CD4-positive, alpha-beta T cell (primary cell): ENCODE measurements at regions of chr16 and their contacts with region 1.

Region 1: GRCh38 chr16:30557957-30558788 is at the start of gene ZNF764:
- DNase-seq: peak; percentile 90 to 99 (median 95)
- ATAC-seq: peak; percentile 89
- H3K4me3 ChIP-seq: peak within 1 kb of the TSS; percentile 73
- H3K4me3 Mint-ChIP-seq: peak within 1 kb of the TSS; percentile 93
- H3K27ac ChIP-seq: peak within 1 kb of the TSS; percentile 93 to 94
- H3K27ac Mint-ChIP-seq: peak within 1 kb of the TSS; percentile 94
- H3K4me1 ChIP-seq: peaks cover 68% of the 10 kb centered on the region
- H3K4me1 Mint-ChIP-seq: peaks cover 41% of the 10 kb centered on the region
- H3K27me3 ChIP-seq: no peaks in the 10 kb centered on the region
- H3K27me3 Mint-ChIP-seq: no peaks in the 10 kb centered on the region
- CTCF ChIP-seq: no peak
- total RNA-seq, gene ZNF764: 20.4 to 22.9 TPM

Region 2: DNA sequence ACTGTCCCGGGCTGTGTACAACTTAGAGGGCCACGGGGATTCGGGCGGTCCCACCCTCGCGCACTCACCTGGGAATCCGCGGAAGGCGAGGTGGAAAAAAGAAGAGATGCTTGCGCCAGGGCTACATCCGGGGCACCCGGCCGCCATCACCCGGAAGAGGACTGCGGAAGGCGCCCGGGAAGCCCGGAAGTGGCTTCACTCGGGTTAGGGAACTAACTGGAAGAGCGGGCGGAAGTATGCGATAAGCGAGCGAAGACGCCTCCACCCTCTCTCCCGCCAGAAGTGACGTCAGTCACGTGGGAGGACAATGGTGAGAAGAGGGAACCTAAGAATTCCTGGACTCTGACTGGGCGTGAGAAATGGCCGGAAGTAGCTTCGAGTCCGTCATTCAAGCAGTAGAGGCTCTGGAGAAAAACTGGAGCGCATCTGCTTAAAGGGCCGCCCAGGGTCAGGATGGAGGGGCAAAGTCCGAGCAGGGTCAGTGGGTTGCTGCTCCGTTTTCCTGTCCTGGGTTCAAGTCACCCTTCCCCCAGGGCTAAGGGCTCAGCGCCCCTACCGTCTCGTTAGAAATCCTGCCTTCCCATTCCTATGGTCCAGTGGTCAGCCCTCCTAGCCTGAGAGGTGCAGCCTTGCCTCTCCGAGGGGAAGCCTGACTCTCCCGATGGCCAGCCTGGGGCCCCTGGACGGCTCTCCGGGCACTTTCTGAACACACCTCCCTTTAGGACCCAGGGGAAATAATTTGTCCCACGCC is 202.9 kb before region 1 on chr16 and contains the start of gene CD2BP2:
- CTCF ChIA-PET with region 1: no interaction called
- POLR2A ChIA-PET with region 1: no interaction called
- intact Hi-C with region 1: loop called in 1 of 2 experiments (anchors 5 kb)
- DNase-seq: peak; percentile 71 to 97 (median 84)
- ATAC-seq: peak; percentile 88
- H3K4me3 ChIP-seq: peak within 1 kb of the TSS; percentile 98
- H3K4me3 Mint-ChIP-seq: peak within 1 kb of the TSS; percentile 91
- H3K27ac ChIP-seq: peak within 1 kb of the TSS; percentile 92 to 99
- H3K27ac Mint-ChIP-seq: peak within 1 kb of the TSS; percentile 89
- H3K4me1 ChIP-seq: peaks cover 35% of the 10 kb centered on the region
- H3K4me1 Mint-ChIP-seq: peaks cover 28% of the 10 kb centered on the region
- H3K27me3 ChIP-seq: no peaks in the 10 kb centered on the region
- H3K27me3 Mint-ChIP-seq: no peaks in the 10 kb centered on the region
- CTCF ChIP-seq: no peak
- total RNA-seq, gene CD2BP2: 39.1 to 41.7 TPM

Region 3: GRCh38 chr16:30526823-30527635 is 31.1 kb before region 1 on chr16:
- CTCF ChIA-PET with region 1: interaction called, 22 read pairs
- POLR2A ChIA-PET with region 1: interaction called, 7 read pairs
- intact Hi-C with region 1: loop called in 1 of 2 experiments (anchors 2 kb)
- DNase-seq: peak; percentile 57 to 95 (median 86)
- ATAC-seq: peak; percentile 71
- H3K4me3 ChIP-seq: peak overlapping the region; percentile 83
- H3K4me3 Mint-ChIP-seq: peak overlapping the region; percentile 88
- H3K27ac ChIP-seq: peak overlapping the region; percentile 76 to 81
- H3K27ac Mint-ChIP-seq: peak overlapping the region; percentile 81
- H3K4me1 ChIP-seq: peaks cover 49% of the 10 kb centered on the region
- H3K4me1 Mint-ChIP-seq: peaks cover 26% of the 10 kb centered on the region
- H3K27me3 ChIP-seq: no peaks in the 10 kb centered on the region
- H3K27me3 Mint-ChIP-seq: no peaks in the 10 kb centered on the region
- CTCF ChIP-seq: peak; percentile 18

Region 4: GRCh38 chr16:30571695-30572600 is 13.8 kb after region 1 on chr16 and contains the start of gene ZNF688:
- CTCF ChIA-PET with region 1: interaction called, 19 read pairs
- POLR2A ChIA-PET with region 1: interaction called, 152 read pairs
- intact Hi-C with region 1: loop called (anchors 1 kb)
- DNase-seq: peak; percentile 87 to 99 (median 92)
- ATAC-seq: peak; percentile 79
- H3K4me3 ChIP-seq: peak within 1 kb of the TSS; percentile 94
- H3K4me3 Mint-ChIP-seq: peak within 1 kb of the TSS; percentile 98
- H3K27ac ChIP-seq: peak within 1 kb of the TSS; percentile 90 to 96
- H3K27ac Mint-ChIP-seq: peak within 1 kb of the TSS; percentile 97
- H3K4me1 ChIP-seq: peaks cover 51% of the 10 kb centered on the region
- H3K4me1 Mint-ChIP-seq: peaks cover 42% of the 10 kb centered on the region
- H3K27me3 ChIP-seq: no peaks in the 10 kb centered on the region
- H3K27me3 Mint-ChIP-seq: no peaks in the 10 kb centered on the region
- CTCF ChIP-seq: no peak
- total RNA-seq, gene ZNF688: 8.8 to 9.6 TPM

Region 5: DNA sequence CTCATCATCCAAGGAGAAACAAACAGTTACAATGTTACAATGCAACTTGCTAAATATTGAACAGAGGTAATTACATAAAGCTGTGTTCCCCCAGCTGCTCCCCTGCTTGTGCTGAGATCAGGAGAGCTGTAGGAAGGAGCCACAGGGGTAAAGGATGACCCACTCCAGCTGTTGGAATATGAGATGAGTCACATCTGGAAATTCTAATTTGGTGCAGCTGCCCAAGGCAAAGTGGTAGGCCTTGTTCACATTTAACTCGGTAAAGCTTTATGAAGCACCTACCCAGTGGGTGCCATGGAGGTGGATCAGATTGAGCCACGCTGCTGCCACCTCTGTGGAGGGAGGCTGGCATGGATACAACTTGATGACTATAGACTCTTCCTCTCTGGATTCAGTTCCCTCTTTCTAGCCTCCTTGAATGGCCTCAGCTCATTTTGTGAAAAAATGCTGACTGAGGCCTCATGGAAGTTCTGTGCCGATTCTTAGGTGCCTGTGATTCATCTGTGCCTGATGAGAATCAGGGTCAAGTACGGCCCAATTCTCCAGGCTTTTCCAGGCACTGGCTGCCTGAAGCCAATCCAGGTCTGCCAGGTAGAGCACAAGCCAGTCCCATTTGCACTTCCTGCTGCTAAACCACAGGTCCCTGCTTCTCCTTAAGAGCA is 44.6 kb after region 1 on chr16:
- CTCF ChIA-PET with region 1: interaction called, 6 read pairs
- POLR2A ChIA-PET with region 1: interaction called, 3 read pairs
- intact Hi-C with region 1: loop called in 1 of 2 experiments (anchors 5 kb)
- DNase-seq: peak in 2 of 14 experiments; percentile 20 to 26
- ATAC-seq: no peak
- H3K4me3 ChIP-seq: no peak overlapping the region
- H3K4me3 Mint-ChIP-seq: no peak overlapping the region
- H3K27ac ChIP-seq: no peak overlapping the region
- H3K27ac Mint-ChIP-seq: no peak overlapping the region
- H3K4me1 ChIP-seq: peaks cover 7% of the 10 kb centered on the region
- H3K4me1 Mint-ChIP-seq: peaks cover 9% of the 10 kb centered on the region
- H3K27me3 ChIP-seq: no peaks in the 10 kb centered on the region
- H3K27me3 Mint-ChIP-seq: no peaks in the 10 kb centered on the region
- CTCF ChIP-seq: no peak

Region 6: GRCh38 chr16:30637942-30638341 is 79.8 kb after region 1 on chr16:
- CTCF ChIA-PET with region 1: no interaction called
- POLR2A ChIA-PET with region 1: interaction called, 7 read pairs
- intact Hi-C with region 1: loop called in 1 of 2 experiments (anchors 5 kb)
- DNase-seq: peak in 4 of 14 experiments; percentile 19 to 75 (median 63)
- ATAC-seq: peak; percentile 17
- H3K4me3 ChIP-seq: no peak overlapping the region
- H3K4me3 Mint-ChIP-seq: peak overlapping the region; percentile 48
- H3K27ac ChIP-seq: no peak overlapping the region
- H3K27ac Mint-ChIP-seq: no peak overlapping the region
- H3K4me1 ChIP-seq: peaks cover 19% of the 10 kb centered on the region
- H3K4me1 Mint-ChIP-seq: peaks cover 17% of the 10 kb centered on the region
- H3K27me3 ChIP-seq: no peaks in the 10 kb centered on the region
- H3K27me3 Mint-ChIP-seq: no peaks in the 10 kb centered on the region
- CTCF ChIP-seq: peak; percentile 24

Region 7: GRCh38 chr16:30698139-30698815 is 140.1 kb after region 1 on chr16:
- CTCF ChIA-PET with region 1: interaction called, 3 read pairs
- POLR2A ChIA-PET with region 1: no interaction called
- intact Hi-C with region 1: loop called in 1 of 2 experiments (anchors 1 kb)
- DNase-seq: peak; percentile 97 to 100 (median 99)
- ATAC-seq: peak; percentile 75
- H3K4me3 ChIP-seq: peak overlapping the region; percentile 97
- H3K4me3 Mint-ChIP-seq: peak overlapping the region; percentile 98
- H3K27ac ChIP-seq: peak overlapping the region; percentile 100
- H3K27ac Mint-ChIP-seq: peak overlapping the region; percentile 100
- H3K4me1 ChIP-seq: peaks cover 38% of the 10 kb centered on the region
- H3K4me1 Mint-ChIP-seq: peaks cover 37% of the 10 kb centered on the region
- H3K27me3 ChIP-seq: no peaks in the 10 kb centered on the region
- H3K27me3 Mint-ChIP-seq: no peaks in the 10 kb centered on the region
- CTCF ChIP-seq: no peak